ENCODE measurements at regions of chr11 and their contacts with region 1.

Region 1: GRCh38 chr11:94563176-94563847 is 3.9 kb upstream of the PIWIL4 start:
- DNase-seq: no peak
- H3K4me3 Mint-ChIP-seq: no peak overlapping the region
- H3K27ac Mint-ChIP-seq: peak overlapping the region; percentile 25
- H3K4me1 Mint-ChIP-seq: peaks cover 24% of the 10 kb centered on the region
- H3K27me3 Mint-ChIP-seq: no peaks in the 10 kb centered on the region
- CTCF ChIP-seq: no peak

Region 2: DNA sequence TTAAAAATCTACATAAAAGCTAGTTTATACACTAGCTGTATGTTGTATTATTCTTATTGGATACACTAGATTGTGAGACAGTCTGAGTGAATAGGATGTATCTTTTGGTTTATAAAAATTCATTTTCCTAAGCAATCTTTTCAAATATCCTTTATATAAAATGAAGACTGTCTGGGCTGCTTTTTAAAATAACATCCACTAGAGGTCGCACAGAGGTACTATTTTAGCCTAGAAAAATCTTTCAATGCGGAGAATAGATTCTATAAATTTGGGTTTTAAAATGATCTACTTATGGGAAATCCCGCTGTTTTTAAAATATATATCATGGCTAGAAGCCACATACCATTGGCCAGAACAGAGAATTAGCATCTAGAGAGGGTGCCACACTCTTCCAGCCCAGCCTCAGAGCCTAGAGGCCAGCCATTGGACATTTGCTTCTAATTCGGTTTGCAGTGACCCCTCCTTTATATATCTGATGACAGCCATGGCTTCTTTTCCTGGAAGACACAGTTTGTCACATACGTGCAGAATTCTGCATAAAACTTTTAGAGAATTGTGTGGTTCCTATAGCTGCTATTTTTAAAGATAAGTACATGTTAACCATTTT is 43.7 kb before region 1 on chr11:
- CTCF ChIA-PET with region 1: no interaction called
- intact Hi-C with region 1: loop called (anchors 1 kb)
- DNase-seq: no peak
- H3K4me3 Mint-ChIP-seq: no peak overlapping the region
- H3K27ac Mint-ChIP-seq: no peak overlapping the region
- H3K4me1 Mint-ChIP-seq: no peaks in the 10 kb centered on the region
- H3K27me3 Mint-ChIP-seq: no peaks in the 10 kb centered on the region
- CTCF ChIP-seq: peak; percentile 19

Region 3: GRCh38 chr11:94576306-94576705 is 13.0 kb after region 1 on chr11:
- CTCF ChIA-PET with region 1: no interaction called
- intact Hi-C with region 1: no loop called
- DNase-seq: no peak
- H3K4me3 Mint-ChIP-seq: no peak overlapping the region
- H3K27ac Mint-ChIP-seq: no peak overlapping the region
- H3K4me1 Mint-ChIP-seq: no peaks in the 10 kb centered on the region
- H3K27me3 Mint-ChIP-seq: no peaks in the 10 kb centered on the region
- CTCF ChIP-seq: no peak